PC-3 (cell line): ENCODE measurements at regions of chr6 and their contacts with region 1.

Region 1: GRCh38 chr6:13172291-13172690 is 156.0 kb downstream of the TBC1D7 start:
- DNase-seq: no peak
- ATAC-seq: no peak
- H3K4me3 ChIP-seq: no peak overlapping the region
- H3K27ac ChIP-seq: no peak overlapping the region
- H3K4me1 ChIP-seq: no peaks in the 10 kb centered on the region
- H3K27me3 ChIP-seq: peaks cover 81% of the 10 kb centered on the region
- CTCF ChIP-seq: no peak

Region 2: DNA sequence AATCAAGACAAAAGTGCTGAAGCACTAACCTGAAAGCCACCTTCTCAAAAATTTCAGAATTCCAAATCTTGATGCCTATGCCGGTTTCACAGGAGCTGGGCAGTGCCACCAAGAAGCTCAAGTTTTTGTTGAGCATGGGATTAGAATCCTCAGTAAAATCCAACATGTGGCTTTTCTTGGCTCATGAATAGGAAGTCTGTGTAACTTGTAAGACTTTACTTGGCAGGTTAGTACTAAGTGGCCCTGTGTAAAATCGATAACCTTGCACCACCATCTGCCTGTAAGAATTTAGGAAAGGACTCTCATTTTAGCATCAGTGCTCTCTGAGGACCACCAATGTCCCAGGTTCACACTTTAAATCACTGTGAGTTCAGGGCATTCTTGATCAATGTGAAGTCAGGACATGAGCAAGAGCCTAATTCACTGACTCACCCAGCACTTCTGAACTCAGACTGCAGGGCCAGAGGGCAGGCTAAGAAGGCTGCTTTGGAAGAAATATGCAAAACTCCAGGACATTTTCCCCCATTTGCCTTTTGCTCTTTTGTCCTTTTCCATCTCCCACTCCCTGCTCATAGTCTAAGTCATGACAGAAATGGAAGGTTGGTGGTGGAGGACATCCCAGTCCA is 769.0 kb before region 1 on chr6:
- CTCF ChIA-PET with region 1: no interaction called
- POLR2A ChIA-PET with region 1: no interaction called
- intact Hi-C with region 1: loop called (anchors 5 kb)
- DNase-seq: peak; percentile 68
- ATAC-seq: peak; percentile 74
- H3K4me3 ChIP-seq: no peak overlapping the region
- H3K27ac ChIP-seq: no peak overlapping the region
- H3K4me1 ChIP-seq: peaks cover 15% of the 10 kb centered on the region
- H3K27me3 ChIP-seq: no peaks in the 10 kb centered on the region
- CTCF ChIP-seq: no peak

Region 3: GRCh38 chr6:13217206-13217905 is 45.1 kb after region 1 on chr6:
- CTCF ChIA-PET with region 1: no interaction called
- POLR2A ChIA-PET with region 1: no interaction called
- intact Hi-C with region 1: no loop called
- DNase-seq: no peak
- ATAC-seq: no peak
- H3K4me3 ChIP-seq: no peak overlapping the region
- H3K27ac ChIP-seq: no peak overlapping the region
- H3K4me1 ChIP-seq: no peaks in the 10 kb centered on the region
- H3K27me3 ChIP-seq: peaks cover 93% of the 10 kb centered on the region
- CTCF ChIP-seq: no peak